ENCODE measurements at regions of chr3 and their contacts with region 1.

Region 1: DNA sequence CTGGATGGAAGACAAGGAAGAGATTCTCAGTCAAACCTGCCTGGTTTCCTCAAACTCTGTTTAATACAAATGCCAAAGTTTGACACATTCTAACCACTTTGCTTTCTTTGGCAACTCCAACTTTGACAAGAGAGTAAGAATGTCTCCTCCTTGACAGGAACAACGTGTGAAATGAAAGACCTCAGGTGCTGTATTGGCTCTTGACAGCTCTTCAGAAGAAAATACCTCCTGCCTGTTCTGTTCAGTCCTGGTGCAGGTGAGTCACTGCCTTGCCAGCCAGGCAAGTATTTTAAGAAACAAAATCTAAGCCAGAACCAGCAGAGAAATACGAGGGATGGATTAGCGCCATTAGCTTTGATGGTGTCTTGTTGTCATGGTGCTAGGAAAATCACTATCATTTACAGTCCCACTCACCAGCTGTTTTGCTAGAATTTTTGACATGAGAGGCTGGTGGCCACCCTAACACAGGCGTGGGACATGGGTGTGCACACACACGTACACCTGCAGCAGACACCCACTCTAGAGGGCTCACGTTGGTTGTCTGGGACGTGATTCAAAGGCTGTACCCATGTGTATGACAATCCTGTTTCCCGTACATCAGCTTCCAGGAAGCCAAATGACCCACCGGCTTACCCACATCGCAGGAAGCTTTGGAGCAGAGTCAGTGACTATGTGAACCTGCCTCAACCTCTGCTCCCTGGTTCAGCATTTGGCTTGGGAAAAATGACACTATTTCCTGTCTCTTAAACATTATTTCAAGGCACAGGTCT is 60.4 kb downstream of the CCNL1 start:
- DNase-seq: no peak
- ATAC-seq: no peak
- H3K4me3 ChIP-seq: no peak overlapping the region
- H3K27ac ChIP-seq: no peak overlapping the region
- H3K4me1 ChIP-seq: peaks cover 45% of the 10 kb centered on the region
- H3K27me3 ChIP-seq: no peaks in the 10 kb centered on the region
- CTCF ChIP-seq: no peak
- EP300 ChIP-seq: no peak
- POLR2A ChIP-seq: no peak
- RAD21 ChIP-seq: no peak

Region 2: DNA sequence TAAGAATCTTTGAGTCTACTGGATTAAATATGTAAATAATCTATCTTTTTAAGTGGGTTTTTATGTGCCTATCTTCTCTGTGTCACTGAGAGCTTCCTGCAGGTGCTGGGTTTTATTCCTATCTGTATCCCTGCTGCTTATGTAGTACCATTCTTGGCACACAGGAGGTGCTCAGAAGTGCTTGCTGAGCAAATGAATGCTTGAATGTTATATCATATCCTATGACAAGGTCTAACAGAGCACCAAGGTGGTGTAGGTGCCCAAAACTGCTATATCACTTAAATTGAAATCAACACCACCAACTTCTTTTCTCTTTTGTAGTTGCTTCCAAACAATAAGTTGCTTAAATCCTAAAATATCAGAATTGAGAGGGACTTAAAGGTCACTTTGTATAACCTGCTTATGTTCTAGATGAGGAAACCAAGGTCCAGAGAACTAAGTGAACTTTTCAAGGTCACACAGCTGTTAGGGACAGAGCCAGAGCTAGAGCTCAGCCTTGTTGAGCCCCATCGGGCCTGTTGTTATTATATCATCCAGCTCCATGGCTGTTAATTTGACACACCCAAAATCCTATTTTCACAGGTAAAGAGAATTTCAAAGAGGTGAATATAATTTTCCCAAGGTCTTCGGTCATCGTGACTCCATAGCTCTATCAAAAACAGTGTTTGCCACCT is 14.5 kb after region 1 on chr3:
- CTCF ChIA-PET with region 1: no interaction called
- POLR2A ChIA-PET with region 1: interaction called, 10 read pairs
- in situ Hi-C with region 1: no loop called
- intact Hi-C with region 1: no loop called
- DNase-seq: no peak
- ATAC-seq: peak; percentile 70
- H3K4me3 ChIP-seq: no peak overlapping the region
- H3K27ac ChIP-seq: no peak overlapping the region
- H3K4me1 ChIP-seq: peaks cover 42% of the 10 kb centered on the region
- H3K27me3 ChIP-seq: no peaks in the 10 kb centered on the region
- CTCF ChIP-seq: no peak
- EP300 ChIP-seq: no peak
- POLR2A ChIP-seq: no peak
- RAD21 ChIP-seq: no peak

Region 3: GRCh38 chr3:157122116-157122515 is 22.6 kb after region 1 on chr3:
- CTCF ChIA-PET with region 1: no interaction called
- POLR2A ChIA-PET with region 1: interaction called, 21 read pairs
- in situ Hi-C with region 1: loop called (anchors 5 kb)
- intact Hi-C with region 1: no loop called
- DNase-seq: peak; percentile 43
- ATAC-seq: no peak
- H3K4me3 ChIP-seq: no peak overlapping the region
- H3K27ac ChIP-seq: peak overlapping the region; percentile 23
- H3K4me1 ChIP-seq: peaks cover 86% of the 10 kb centered on the region
- H3K27me3 ChIP-seq: no peaks in the 10 kb centered on the region
- CTCF ChIP-seq: no peak
- EP300 ChIP-seq: peak in 1 of 2 experiments; percentile 40; a peak in 1 of 4 replicates
- POLR2A ChIP-seq: no peak
- RAD21 ChIP-seq: no peak